ENCODE measurements at regions of chr6 and their contacts with region 1.

Region 1: DNA sequence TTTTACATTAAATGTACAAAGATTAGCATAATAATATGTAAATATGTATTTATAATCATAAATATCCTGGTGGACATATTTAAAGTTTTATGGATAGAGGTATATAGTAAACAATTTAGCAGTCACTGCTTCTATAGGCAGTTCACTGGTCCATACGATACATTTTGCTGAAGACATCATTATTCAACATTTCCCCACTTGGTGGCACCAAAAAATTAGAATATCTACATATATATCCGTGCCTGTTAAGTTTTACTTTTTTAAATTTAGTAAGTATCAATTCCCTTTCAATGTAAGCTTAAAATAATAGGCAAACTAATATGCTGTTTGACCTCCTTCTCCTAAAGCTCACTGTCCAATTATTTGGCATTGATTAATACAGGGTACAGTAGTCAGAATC is 64.2 kb downstream of the LMBRD1 start:
- DNase-seq: no peak
- H3K4me3 ChIP-seq: no peak overlapping the region
- H3K27ac ChIP-seq: no peak overlapping the region
- H3K4me1 ChIP-seq: peaks cover 0 to 13% (median 6%) of the 10 kb centered on the region in 4 donors
- H3K27me3 ChIP-seq: no peaks in the 10 kb centered on the region
- CTCF ChIP-seq: peak in 2 of 3 experiments; percentile 26 to 31
- EP300 ChIP-seq: no peak
- POLR2A ChIP-seq: no peak

Region 2: DNA sequence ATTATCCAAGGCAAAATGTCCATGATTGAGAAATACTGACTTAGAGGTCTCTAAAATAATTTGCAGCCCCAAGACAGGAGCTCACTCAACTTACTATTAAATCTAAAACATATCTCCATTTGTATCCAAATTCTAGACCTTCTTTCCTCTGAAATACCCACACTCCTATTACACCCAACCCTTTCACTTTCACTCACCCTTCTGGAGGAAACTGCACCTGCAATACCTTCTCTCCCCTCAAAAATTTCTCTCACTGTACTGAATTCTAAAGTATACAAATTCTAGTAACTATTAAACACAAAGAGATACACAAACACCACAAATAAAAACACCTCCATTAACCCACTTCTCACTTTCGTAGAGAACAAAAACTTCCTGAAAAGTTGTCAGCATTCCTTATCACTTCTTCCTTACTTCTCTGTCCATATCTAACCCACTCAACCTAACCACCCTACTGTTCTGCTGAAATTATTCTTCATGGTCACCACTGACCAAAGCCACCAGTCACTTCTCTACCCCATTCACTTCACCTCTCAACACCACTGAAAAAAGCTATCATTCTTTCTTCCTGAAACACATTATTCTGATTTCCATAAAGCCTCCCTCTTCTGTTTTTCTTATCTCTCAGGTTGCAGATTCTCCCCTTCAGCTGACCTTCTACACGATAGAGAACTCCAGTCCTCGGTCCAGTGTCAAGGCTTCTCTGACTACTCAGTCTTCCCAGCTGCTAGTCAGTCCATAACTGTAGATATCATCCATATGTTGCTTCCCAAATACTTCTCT is 52.1 kb after region 1 on chr6:
- intact Hi-C with region 1: no loop called
- DNase-seq: no peak
- H3K4me3 ChIP-seq: no peak overlapping the region
- H3K27ac ChIP-seq: peak overlapping the region; percentile 56 to 75 (median 65)
- H3K4me1 ChIP-seq: peaks cover 6 to 67% (median 60%) of the 10 kb centered on the region in 4 donors
- H3K27me3 ChIP-seq: no peaks in the 10 kb centered on the region
- CTCF ChIP-seq: no peak
- EP300 ChIP-seq: no peak
- POLR2A ChIP-seq: no peak

Region 3: DNA sequence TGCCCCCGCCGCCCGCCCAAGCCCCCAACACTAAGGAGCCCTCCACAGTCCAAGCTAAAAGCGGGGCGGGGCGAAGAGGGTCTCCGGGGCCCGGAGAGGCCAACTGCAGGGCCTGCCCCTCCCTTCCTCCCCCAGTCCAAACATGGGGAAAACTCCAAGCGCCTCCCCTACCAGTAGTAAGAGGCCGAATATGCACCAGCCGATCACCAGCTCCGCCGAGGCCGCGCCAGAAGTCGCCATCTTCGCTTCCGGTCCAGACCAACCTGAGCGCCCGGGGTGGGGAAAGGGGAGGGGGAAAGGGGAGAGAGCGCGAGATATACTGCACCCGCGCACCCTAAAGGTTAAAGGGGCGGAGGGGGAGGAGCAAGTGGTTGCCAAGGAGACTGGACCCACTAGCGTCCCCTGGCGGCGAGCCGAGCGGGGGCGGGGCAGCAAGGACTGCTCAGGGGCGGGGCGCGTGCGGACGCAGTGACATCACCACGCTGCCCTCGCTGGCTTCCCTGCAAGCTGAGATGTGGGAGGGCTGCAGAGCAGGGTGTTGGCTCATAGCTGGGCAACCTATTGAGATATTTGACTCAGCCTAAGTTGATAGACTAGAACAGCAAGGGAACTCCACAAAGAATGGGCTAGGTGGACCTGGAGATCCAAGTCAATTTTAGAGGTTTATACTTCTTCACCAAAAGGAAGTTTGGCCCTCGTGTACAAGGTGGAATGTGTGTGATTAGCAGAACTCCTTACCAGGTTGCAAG is 64.2 kb after region 1 on chr6 and contains the start of gene LMBRD1:
- intact Hi-C with region 1: loop called (anchors 5 kb)
- DNase-seq: peak; percentile 99
- H3K4me3 ChIP-seq: peak within 1 kb of the TSS; percentile 68 to 81 (median 76)
- H3K27ac ChIP-seq: peak within 1 kb of the TSS; percentile 86 to 98 (median 92)
- H3K4me1 ChIP-seq: peaks cover 12 to 47% (median 38%) of the 10 kb centered on the region in 4 donors
- H3K27me3 ChIP-seq: no peaks in the 10 kb centered on the region
- CTCF ChIP-seq: peak; percentile 69 to 90 (median 72)
- EP300 ChIP-seq: no peak
- POLR2A ChIP-seq: no peak
- total RNA-seq, gene LMBRD1: 36.9 to 52.9 (median 49.5) TPM

Region 4: GRCh38 chr6:69866770-69867638 is 134.4 kb after region 1 on chr6:
- intact Hi-C with region 1: loop called (anchors 10 kb)
- DNase-seq: no peak
- H3K4me3 ChIP-seq: peak overlapping the region; percentile 64 to 85 (median 66)
- H3K27ac ChIP-seq: peak overlapping the region; percentile 42 to 70 (median 54)
- H3K4me1 ChIP-seq: peaks cover 11 to 19% (median 14%) of the 10 kb centered on the region in 4 donors
- H3K27me3 ChIP-seq: no peaks in the 10 kb centered on the region
- CTCF ChIP-seq: peak in 1 of 3 experiments; percentile 39
- EP300 ChIP-seq: no peak
- POLR2A ChIP-seq: no peak